ENCODE measurements at regions of chr13 and their contacts with region 1.

Region 1: DNA sequence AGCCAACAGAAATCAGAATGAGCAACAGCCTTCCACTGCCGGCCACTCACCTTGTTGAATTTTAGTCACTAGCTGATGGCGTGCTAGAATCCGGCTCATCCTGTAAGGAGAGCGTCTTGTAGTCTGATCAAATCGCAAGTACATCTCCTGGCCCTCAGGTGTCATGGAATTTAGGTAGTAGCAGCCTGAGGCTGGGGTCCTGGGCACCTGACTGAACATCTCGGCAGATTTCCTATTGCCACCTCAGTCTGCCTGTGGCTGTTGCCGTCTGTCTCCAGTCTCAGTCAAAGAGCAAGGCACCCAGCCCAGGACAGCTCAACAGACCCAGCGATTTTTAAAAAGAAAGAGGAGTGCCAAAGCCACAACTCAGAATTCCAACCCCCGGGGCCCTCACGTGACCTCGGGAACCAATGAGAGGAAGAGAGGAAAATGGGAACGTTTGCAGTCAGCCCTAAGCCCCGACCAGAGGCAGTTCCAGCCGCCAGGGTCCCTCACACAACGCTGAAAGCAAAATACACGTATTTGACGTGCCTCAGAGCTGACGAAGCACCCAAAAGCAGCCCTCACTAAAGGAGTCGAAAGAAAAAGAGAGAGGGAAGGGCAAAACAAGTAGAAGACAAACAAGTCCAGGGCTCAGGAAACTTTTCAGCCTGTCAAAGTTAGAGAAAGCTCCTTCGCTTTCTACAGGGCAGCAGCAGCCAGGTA is at the start of gene STARD13:
- DNase-seq: peak; percentile 97
- H3K4me3 Mint-ChIP-seq: peak within 1 kb of the TSS; percentile 91
- H3K27ac Mint-ChIP-seq: peak within 1 kb of the TSS; percentile 95
- H3K4me1 Mint-ChIP-seq: peaks cover 30% of the 10 kb centered on the region
- H3K27me3 Mint-ChIP-seq: no peaks in the 10 kb centered on the region
- CTCF ChIP-seq: peak; percentile 12
- total RNA-seq, gene STARD13: 26.3 and 31.9 TPM in 2 replicates

Region 2: GRCh38 chr13:33119871-33120456 is 165.6 kb before region 1 on chr13:
- CTCF ChIA-PET with region 1: no interaction called
- POLR2A ChIA-PET with region 1: interaction called, 13 read pairs
- intact Hi-C with region 1: no loop called
- DNase-seq: peak; percentile 84
- H3K4me3 Mint-ChIP-seq: peak overlapping the region; percentile 42
- H3K27ac Mint-ChIP-seq: peak overlapping the region; percentile 87
- H3K4me1 Mint-ChIP-seq: peaks cover 23% of the 10 kb centered on the region
- H3K27me3 Mint-ChIP-seq: no peaks in the 10 kb centered on the region
- CTCF ChIP-seq: no peak

Region 3: DNA sequence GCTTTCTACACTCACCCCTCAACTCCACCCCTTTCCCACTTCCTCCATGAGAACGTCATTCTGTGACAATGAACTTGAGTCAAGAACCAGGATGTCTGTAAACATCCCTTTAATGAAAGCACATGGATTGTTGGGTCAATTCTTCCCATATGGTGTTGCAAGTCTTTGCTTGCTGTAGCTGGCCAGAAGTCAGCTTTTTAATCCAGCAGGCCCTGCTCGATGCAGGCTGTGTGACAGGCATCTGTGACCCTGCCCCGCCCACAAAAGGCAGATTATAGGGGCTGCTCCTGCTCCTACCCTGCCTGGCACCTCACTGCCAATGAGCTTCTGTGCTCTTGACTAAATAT is 78.0 kb before region 1 on chr13:
- CTCF ChIA-PET with region 1: no interaction called
- POLR2A ChIA-PET with region 1: interaction called, 25 read pairs
- intact Hi-C with region 1: no loop called
- DNase-seq: peak; percentile 81
- H3K4me3 Mint-ChIP-seq: peak overlapping the region; percentile 41
- H3K27ac Mint-ChIP-seq: peak overlapping the region; percentile 91
- H3K4me1 Mint-ChIP-seq: peaks cover 42% of the 10 kb centered on the region
- H3K27me3 Mint-ChIP-seq: no peaks in the 10 kb centered on the region
- CTCF ChIP-seq: no peak

Region 4: DNA sequence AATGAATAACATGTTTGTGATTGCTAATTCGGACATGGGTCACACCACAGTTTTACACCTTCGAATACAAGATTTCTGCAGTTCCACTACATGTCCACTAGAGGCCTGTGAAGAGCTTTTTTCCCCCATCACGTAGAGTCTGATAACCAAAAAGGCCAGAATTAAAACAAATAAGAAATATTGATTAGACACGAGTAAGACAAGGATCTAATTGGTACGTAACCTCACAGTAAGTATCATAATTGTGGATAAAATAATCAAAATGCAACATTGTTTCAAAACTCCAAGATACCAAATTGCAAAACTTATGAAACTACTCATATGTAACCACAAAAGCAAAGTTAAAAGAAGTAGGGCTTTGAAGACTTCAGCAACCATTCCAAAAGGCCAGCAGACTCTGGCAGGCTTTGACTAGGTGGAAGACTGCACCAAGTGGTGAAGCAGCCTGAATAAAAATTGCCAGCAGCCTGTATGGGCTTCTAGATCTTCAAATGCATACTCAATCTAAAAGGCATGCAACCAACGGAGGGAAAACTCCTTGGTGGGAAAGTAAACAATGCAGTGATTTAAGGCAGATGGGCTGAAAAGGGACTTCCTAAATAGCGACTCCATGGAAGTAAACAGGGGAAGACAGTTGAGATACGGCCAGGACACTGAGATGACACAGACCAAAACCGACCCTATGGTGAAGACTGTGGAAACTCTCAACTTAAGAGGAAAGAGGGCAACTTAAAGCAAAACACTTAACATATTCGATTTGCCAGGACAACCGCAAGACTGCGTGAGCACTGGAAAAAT is 56.7 kb before region 1 on chr13:
- CTCF ChIA-PET with region 1: interaction called, 6 read pairs
- POLR2A ChIA-PET with region 1: interaction called, 97 read pairs
- intact Hi-C with region 1: loop called (anchors 1 kb)
- DNase-seq: peak; percentile 61
- H3K4me3 Mint-ChIP-seq: peak overlapping the region; percentile 9
- H3K27ac Mint-ChIP-seq: peak overlapping the region; percentile 46
- H3K4me1 Mint-ChIP-seq: peaks cover 49% of the 10 kb centered on the region
- H3K27me3 Mint-ChIP-seq: no peaks in the 10 kb centered on the region
- CTCF ChIP-seq: peak; percentile 89

Region 5: DNA sequence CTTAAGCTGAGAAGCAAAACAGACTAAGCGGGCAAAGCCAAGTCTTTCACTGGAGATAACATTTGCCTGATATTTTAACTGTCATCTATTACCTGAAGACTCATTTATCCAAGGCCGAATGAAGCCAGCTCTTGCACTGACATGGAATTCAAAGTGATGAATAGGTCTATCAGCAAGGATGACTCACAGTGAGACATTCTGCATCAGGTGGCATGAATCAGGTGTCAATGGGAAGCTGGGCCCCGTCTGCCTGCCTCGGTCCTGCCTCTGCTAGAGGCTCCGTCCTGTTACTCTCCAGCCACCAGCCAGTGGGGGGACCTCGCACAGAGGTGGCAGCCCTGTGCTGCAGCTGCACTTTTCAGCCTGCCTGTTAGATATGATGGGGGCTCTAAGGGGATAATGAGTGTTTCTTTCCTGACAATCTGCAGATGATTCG is 23.5 kb before region 1 on chr13:
- CTCF ChIA-PET with region 1: interaction called, 3 read pairs
- POLR2A ChIA-PET with region 1: interaction called, 192 read pairs
- intact Hi-C with region 1: loop called (anchors 2 kb)
- DNase-seq: peak; percentile 85
- H3K4me3 Mint-ChIP-seq: no peak overlapping the region
- H3K27ac Mint-ChIP-seq: peak overlapping the region; percentile 64
- H3K4me1 Mint-ChIP-seq: peaks cover 87% of the 10 kb centered on the region
- H3K27me3 Mint-ChIP-seq: no peaks in the 10 kb centered on the region
- CTCF ChIP-seq: no peak